HEK293 (cell line): ENCODE measurements at regions of chrX and their contacts with region 1.

Region 1: DNA sequence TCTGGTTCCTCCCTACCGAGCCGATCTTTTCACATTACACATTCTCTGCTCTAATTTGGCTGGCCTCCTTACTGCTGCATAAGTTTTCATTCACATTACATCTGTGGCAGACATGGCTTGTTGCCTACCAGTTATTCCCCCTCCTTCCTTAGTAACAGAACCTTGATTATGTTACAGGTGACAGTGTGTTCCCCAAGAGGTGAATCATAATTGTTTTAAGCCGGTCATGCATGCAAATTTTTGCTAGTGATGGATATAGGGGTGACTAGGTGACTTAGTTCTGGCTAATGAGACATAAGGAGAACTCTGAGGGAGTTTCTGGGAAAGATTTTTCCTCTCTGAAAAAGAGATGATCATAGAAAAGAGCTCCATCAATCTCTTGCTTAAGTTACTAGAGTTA is 8.4 kb upstream of the LAMP2 start:
- H3K4me3 ChIP-seq: no peak overlapping the region
- H3K27ac ChIP-seq: no peak overlapping the region
- H3K4me1 ChIP-seq: no peaks in the 10 kb centered on the region
- CTCF ChIP-seq: no peak

Region 2: DNA sequence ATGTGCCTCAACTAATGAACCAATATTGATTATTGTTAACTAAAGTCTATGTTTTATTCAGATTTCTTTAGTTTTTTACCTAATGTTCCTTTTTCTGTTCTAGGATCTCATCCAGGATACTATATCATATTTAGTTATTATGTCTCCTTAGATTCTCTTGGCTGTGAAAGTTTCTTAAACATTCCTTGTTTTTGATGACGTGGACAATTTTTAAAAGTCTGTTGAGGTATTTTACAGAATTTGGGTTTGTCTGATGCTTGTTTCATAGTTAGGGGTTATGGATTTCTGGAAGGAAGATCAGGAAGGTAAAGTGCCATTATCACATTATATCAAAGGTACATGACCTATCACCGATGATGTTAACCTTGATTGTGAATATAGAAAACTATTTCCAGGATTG is 108.2 kb after region 1 on chrX:
- CTCF ChIA-PET with region 1: no interaction called
- POLR2A ChIA-PET with region 1: no interaction called
- H3K4me3 ChIP-seq: no peak overlapping the region
- H3K27ac ChIP-seq: no peak overlapping the region
- H3K4me1 ChIP-seq: no peaks in the 10 kb centered on the region
- CTCF ChIP-seq: no peak

Region 3: DNA sequence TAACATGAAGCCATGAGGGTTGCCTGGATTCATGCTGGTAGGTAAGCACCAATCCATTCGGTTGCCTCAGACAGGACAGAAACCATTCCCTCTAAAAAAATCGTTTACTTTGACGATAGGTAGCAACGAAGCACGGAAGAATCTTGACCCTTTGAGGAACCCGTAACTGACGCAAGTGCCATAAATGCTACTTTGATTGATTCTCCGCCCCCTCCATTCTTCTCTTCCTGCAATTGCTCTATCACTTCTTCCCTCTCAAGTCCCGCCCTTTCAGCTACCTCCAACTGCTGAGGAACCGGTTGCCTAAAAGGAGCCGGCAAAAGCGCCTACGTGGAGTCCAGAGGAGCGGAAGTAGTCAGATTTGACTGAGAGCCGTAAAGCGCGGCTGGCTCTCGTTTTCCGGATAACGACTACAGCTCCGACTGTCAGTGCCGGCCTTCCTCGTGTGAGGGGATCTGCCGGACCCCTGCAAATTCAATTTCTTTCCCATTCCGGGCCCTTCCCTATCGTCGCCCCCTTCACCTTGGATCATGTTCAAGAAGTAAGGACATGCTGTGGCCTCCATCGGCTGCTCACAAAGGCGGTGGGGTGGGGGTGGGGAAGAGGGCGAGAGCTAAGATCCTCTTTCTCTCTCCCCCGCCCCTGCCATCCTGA is 126.4 kb after region 1 on chrX and contains the start of gene MCTS1:
- CTCF ChIA-PET with region 1: no interaction called
- POLR2A ChIA-PET with region 1: interaction called, 13 read pairs
- H3K4me3 ChIP-seq: peak within 1 kb of the TSS; percentile 54
- H3K27ac ChIP-seq: peak within 1 kb of the TSS; percentile 62
- H3K4me1 ChIP-seq: no peaks in the 10 kb centered on the region; the same call in 1 of the 2 replicates
- CTCF ChIP-seq: no peak